ENCODE measurements at regions of chr7 and their contacts with region 1.

Region 1: DNA sequence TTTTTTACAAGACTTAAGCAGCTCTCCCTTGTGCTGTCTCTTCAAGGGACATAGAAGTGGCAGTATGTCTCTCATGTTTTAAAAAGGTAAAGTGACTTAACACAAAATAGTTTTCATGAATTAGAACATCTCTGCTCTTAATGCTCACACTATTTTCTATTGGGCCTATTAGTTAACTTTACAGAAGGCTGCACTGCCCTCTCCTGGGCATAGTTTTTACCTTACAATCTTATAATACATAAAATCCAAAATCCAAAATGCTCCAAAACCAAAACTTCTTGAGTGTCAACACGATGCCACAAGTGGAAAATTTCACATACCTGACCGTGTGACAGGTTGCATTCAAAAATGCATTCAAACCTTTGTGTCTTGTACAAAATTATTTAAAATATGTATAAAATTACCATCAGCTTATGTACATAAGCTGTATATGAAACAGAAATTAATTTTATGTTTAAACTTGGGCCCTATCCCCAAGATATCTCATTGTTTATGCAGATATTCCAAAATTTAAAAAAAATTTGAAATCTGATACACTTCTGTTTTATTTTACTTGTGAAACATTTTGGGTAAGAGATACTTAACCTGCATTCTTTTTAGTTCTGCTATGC is 25.8 kb downstream of the TES start:
- DNase-seq: peak in 35 of 42 donors; percentile 11 to 86 (median 56)

Region 2: GRCh38 chr7:116087291-116087690 is 148.8 kb before region 1 on chr7:
- intact Hi-C with region 1: no loop called
- DNase-seq: no peak

Region 3: GRCh38 chr7:116173051-116174028 is 62.8 kb before region 1 on chr7:
- intact Hi-C with region 1: loop called (anchors 5 kb)
- DNase-seq: peak in 9 of 42 donors; percentile 15 to 69 (median 30)